Posterior vena cava (tissue), 2 donors: ENCODE measurements at regions of chr2 and their contacts with region 1.

Region 1: GRCh38 chr2:120252225-120253021 is at the start of gene RALB:
- DNase-seq: peak; percentile 100
- total RNA-seq, gene RALB: 42.5 to 55.0 TPM

Region 2: GRCh38 chr2:119888680-119889079 is 363.7 kb before region 1 on chr2:
- intact Hi-C with region 1: no loop called
- DNase-seq: no peak

Region 3: DNA sequence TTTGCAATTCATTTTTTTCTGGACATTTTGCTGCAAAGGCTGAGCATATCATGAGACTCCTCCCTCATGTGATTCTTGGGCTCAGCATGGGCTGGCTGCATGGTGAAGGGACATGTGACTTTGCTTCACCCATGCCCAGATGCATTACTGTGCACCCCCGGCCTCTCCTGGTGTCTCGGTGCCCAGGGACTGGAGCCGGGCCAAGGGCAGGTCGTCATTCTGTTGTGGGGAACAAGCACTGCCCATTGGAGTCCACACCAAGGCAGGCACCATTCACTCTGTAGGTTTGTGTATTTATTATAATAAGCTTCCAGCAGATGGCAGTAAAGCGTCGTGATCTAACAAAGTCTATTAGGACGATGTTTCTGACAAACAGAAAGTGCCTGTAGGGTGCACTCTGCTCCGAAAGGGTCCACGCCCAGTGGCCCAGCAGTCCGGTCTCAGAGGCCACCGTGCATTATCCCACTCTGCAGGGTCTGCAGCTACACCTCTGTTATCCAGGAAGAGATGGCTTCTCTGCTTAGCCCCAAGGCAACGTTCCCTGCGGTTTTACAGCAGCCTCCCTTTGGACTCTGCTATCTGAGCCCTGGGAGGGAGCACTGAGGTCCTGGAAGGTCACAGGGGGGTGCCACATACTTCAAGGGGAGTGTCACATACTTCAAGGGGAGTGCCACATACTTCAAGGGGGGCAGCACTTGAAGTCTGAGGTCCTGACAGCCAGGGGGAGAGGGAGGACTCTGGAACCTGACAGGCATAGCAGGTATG is 1722.7 kb after region 1 on chr2:
- intact Hi-C with region 1: loop called in 1 of 2 experiments (anchors 10 kb)
- DNase-seq: no peak